B cell (primary cell): ENCODE measurements at regions of chr6 and their contacts with region 1.

Region 1: GRCh38 chr6:33126101-33126714 is 50.4 kb downstream of the HLA-DPB1 start:
- DNase-seq: peak; percentile 77
- ATAC-seq: peak; percentile 63
- H3K4me3 ChIP-seq: no peak overlapping the region
- H3K4me3 Mint-ChIP-seq: no peak overlapping the region
- H3K27ac ChIP-seq: no peak overlapping the region
- H3K27ac Mint-ChIP-seq: peak overlapping the region; percentile 59
- H3K4me1 ChIP-seq: peaks cover 0 to 10% of the 10 kb centered on the region in 2 donors
- H3K4me1 Mint-ChIP-seq: peaks cover 5% of the 10 kb centered on the region
- H3K27me3 ChIP-seq: no peaks in the 10 kb centered on the region
- H3K27me3 Mint-ChIP-seq: no peaks in the 10 kb centered on the region
- CTCF ChIP-seq: peak; percentile 87

Region 2: DNA sequence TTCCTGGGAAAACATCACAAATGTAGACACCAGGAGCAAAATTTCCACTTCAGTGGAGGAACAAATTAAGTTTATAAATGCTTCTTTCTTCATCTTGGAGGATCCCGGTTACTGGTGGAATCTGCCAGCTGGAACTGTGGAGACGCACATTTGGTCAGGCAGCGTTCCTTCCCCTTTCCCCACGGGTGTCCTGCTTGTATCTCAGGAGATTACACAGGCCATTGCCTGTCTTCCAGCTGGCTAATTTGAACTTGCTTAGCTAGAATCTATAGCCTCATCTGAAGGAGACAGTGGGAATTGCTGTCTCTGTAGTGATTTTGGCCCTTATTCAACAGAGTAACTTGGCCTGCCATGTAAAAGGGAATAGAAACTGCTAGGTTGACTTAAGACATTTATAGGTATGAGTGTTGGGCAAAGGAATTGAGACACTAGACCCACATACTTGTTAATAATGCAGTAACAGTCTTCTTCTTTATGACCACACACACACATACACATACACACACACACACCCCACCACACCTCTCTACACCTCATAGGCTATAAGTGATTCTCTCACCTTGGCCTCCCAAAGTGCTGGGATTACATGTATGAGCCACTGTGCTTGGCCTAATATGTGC is 788.9 kb before region 1 on chr6:
- CTCF ChIA-PET with region 1: no interaction called
- POLR2A ChIA-PET with region 1: no interaction called
- intact Hi-C with region 1: no loop called
- DNase-seq: peak; percentile 10
- ATAC-seq: no peak
- H3K4me3 ChIP-seq: no peak overlapping the region
- H3K4me3 Mint-ChIP-seq: no peak overlapping the region
- H3K27ac ChIP-seq: no peak overlapping the region
- H3K27ac Mint-ChIP-seq: no peak overlapping the region
- H3K4me1 ChIP-seq: peaks cover 2 to 7% of the 10 kb centered on the region in 2 donors
- H3K4me1 Mint-ChIP-seq: peaks cover 33% of the 10 kb centered on the region
- H3K27me3 ChIP-seq: no peaks in the 10 kb centered on the region
- H3K27me3 Mint-ChIP-seq: no peaks in the 10 kb centered on the region
- CTCF ChIP-seq: no peak

Region 3: DNA sequence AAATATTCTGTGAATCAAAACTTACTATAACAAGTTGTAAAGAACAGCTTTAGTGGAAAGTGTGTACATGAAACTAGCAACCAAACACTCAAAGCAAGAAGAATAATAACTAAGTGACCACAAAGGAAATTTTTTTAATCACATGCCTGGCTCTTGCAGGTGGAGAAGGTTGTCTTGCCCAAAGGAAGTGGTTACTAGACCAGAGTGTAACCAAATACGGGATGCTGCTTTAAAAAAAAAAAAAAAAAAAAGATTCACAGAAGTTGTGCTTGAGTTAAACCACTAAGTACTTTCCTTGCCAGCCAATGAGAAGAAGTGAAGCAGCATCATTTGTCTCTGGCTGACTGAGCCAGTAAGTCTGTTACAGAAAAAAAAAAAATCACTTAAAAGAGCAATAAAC is 440.6 kb before region 1 on chr6:
- CTCF ChIA-PET with region 1: no interaction called
- POLR2A ChIA-PET with region 1: interaction called, 11 read pairs
- intact Hi-C with region 1: no loop called
- DNase-seq: peak; percentile 90
- ATAC-seq: peak; percentile 80
- H3K4me3 ChIP-seq: peak overlapping the region in 1 of 5 experiments; percentile 48
- H3K4me3 Mint-ChIP-seq: peak overlapping the region; percentile 60
- H3K27ac ChIP-seq: peak overlapping the region; percentile 89 to 99
- H3K27ac Mint-ChIP-seq: peak overlapping the region; percentile 92
- H3K4me1 ChIP-seq: peaks cover 43 to 54% of the 10 kb centered on the region in 2 donors
- H3K4me1 Mint-ChIP-seq: peaks cover 73% of the 10 kb centered on the region
- H3K27me3 ChIP-seq: no peaks in the 10 kb centered on the region
- H3K27me3 Mint-ChIP-seq: no peaks in the 10 kb centered on the region
- CTCF ChIP-seq: no peak

Region 4: GRCh38 chr6:33000055-33000454 is 126.2 kb before region 1 on chr6:
- CTCF ChIA-PET with region 1: interaction called, 47 read pairs
- POLR2A ChIA-PET with region 1: no interaction called
- intact Hi-C with region 1: loop called (anchors 1 kb)
- DNase-seq: peak; percentile 79
- ATAC-seq: peak; percentile 94
- H3K4me3 ChIP-seq: no peak overlapping the region
- H3K4me3 Mint-ChIP-seq: peak overlapping the region; percentile 11
- H3K27ac ChIP-seq: peak overlapping the region in 1 of 2 donors; percentile 31
- H3K27ac Mint-ChIP-seq: peak overlapping the region; percentile 53
- H3K4me1 ChIP-seq: peaks cover 10 to 13% of the 10 kb centered on the region in 2 donors
- H3K4me1 Mint-ChIP-seq: peaks cover 21% of the 10 kb centered on the region
- H3K27me3 ChIP-seq: no peaks in the 10 kb centered on the region
- H3K27me3 Mint-ChIP-seq: no peaks in the 10 kb centered on the region
- CTCF ChIP-seq: peak; percentile 70

Region 5: GRCh38 chr6:33075568-33076405 is 50.4 kb before region 1 on chr6 and contains the start of gene HLA-DPB1:
- CTCF ChIA-PET with region 1: interaction called, 11 read pairs
- POLR2A ChIA-PET with region 1: no interaction called
- intact Hi-C with region 1: no loop called
- DNase-seq: peak; percentile 93
- ATAC-seq: peak; percentile 81
- H3K4me3 ChIP-seq: peak within 1 kb of the TSS; percentile 79 to 99 (median 97)
- H3K4me3 Mint-ChIP-seq: peak within 1 kb of the TSS; percentile 97
- H3K27ac ChIP-seq: peak within 1 kb of the TSS; percentile 96 to 99
- H3K27ac Mint-ChIP-seq: peak within 1 kb of the TSS; percentile 98
- H3K4me1 ChIP-seq: peaks cover 48 to 50% of the 10 kb centered on the region in 2 donors
- H3K4me1 Mint-ChIP-seq: peaks cover 60% of the 10 kb centered on the region
- H3K27me3 ChIP-seq: no peaks in the 10 kb centered on the region
- H3K27me3 Mint-ChIP-seq: no peaks in the 10 kb centered on the region
- CTCF ChIP-seq: no peak
- total RNA-seq, gene HLA-DPB1: 1,068 and 1,104 TPM in 2 replicates

Region 6: GRCh38 chr6:33082702-33083101 is 43.5 kb before region 1 on chr6:
- CTCF ChIA-PET with region 1: interaction called, 17 read pairs
- POLR2A ChIA-PET with region 1: no interaction called
- intact Hi-C with region 1: no loop called
- DNase-seq: peak; percentile 65
- ATAC-seq: peak; percentile 63
- H3K4me3 ChIP-seq: peak overlapping the region in 1 of 5 experiments; percentile 7
- H3K4me3 Mint-ChIP-seq: peak overlapping the region; percentile 78
- H3K27ac ChIP-seq: peak overlapping the region; percentile 27 to 82
- H3K27ac Mint-ChIP-seq: peak overlapping the region; percentile 89
- H3K4me1 ChIP-seq: peaks cover 59 to 60% of the 10 kb centered on the region in 2 donors
- H3K4me1 Mint-ChIP-seq: peaks cover 72% of the 10 kb centered on the region
- H3K27me3 ChIP-seq: no peaks in the 10 kb centered on the region
- H3K27me3 Mint-ChIP-seq: no peaks in the 10 kb centered on the region
- CTCF ChIP-seq: peak; percentile 68

Region 7: GRCh38 chr6:33139596-33140206 is 13.5 kb after region 1 on chr6:
- CTCF ChIA-PET with region 1: interaction called, 14 read pairs
- POLR2A ChIA-PET with region 1: no interaction called
- intact Hi-C with region 1: no loop called
- DNase-seq: no peak
- ATAC-seq: no peak
- H3K4me3 ChIP-seq: no peak overlapping the region
- H3K4me3 Mint-ChIP-seq: no peak overlapping the region
- H3K27ac ChIP-seq: no peak overlapping the region
- H3K27ac Mint-ChIP-seq: no peak overlapping the region
- H3K4me1 ChIP-seq: peaks cover 9 to 27% of the 10 kb centered on the region in 2 donors
- H3K4me1 Mint-ChIP-seq: peaks cover 23% of the 10 kb centered on the region
- H3K27me3 ChIP-seq: no peaks in the 10 kb centered on the region
- H3K27me3 Mint-ChIP-seq: peaks cover 5% of the 10 kb centered on the region
- CTCF ChIP-seq: no peak

Region 8: GRCh38 chr6:33147807-33148666 is 21.8 kb after region 1 on chr6:
- CTCF ChIA-PET with region 1: interaction called, 49 read pairs
- POLR2A ChIA-PET with region 1: no interaction called
- intact Hi-C with region 1: no loop called
- DNase-seq: peak; percentile 60
- ATAC-seq: peak; percentile 59
- H3K4me3 ChIP-seq: no peak overlapping the region
- H3K4me3 Mint-ChIP-seq: no peak overlapping the region
- H3K27ac ChIP-seq: no peak overlapping the region
- H3K27ac Mint-ChIP-seq: no peak overlapping the region
- H3K4me1 ChIP-seq: peaks cover 7 to 14% of the 10 kb centered on the region in 2 donors
- H3K4me1 Mint-ChIP-seq: peaks cover 11% of the 10 kb centered on the region
- H3K27me3 ChIP-seq: peaks cover 0 to 7% (median under 1%) of the 10 kb centered on the region in 4 experiments
- H3K27me3 Mint-ChIP-seq: peaks cover 4% of the 10 kb centered on the region
- CTCF ChIP-seq: peak; percentile 80